Endothelial cell of umbilical vein (primary cell): ENCODE measurements at regions of chr1 and their contacts with region 1.

Region 1: GRCh38 chr1:177948336-177948972 is 21.4 kb downstream of the SEC16B start:
- DNase-seq: peak; percentile 75
- H3K4me3 ChIP-seq: no peak overlapping the region
- H3K27ac ChIP-seq: no peak overlapping the region
- H3K4me1 ChIP-seq: no peaks in the 10 kb centered on the region
- H3K27me3 ChIP-seq: no peaks in the 10 kb centered on the region
- CTCF ChIP-seq: peak; percentile 86 to 94
- POLR2A ChIP-seq: no peak

Region 2: DNA sequence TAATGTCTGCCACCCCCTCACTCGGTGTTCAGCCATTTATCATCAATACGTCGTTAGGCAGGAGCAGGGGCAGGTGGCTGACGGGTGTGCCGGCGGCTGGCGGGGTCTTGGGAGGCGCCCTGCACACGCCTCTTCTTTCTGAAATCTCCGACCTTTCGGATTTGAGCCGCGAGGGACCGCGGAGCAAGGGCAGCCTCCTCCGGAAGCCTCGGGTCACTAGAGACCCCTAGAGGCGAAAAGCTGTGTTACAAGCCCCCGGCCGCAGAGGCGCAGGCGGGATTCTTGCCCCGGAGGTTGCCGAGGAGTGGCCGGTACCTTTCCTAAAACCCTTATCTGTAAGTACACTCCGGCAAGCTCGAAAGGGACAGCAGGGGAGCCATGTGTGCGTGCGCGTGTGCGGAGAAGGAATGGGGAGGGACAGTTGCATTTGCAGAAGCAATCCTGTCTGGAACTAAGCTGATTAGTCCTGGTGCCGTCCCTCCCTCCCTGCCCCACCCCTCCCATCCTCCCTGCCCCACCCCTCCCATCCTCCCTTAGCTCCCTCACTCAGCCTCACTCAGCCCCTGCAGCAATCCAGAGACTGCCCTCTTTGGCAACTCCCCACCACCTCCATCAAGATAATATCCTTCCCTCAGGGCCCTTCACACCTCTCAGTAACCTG is 766.7 kb before region 1 on chr1:
- CTCF ChIA-PET with region 1: interaction called, 9 read pairs
- POLR2A ChIA-PET with region 1: no interaction called
- dilution Hi-C with region 1: no loop called
- intact Hi-C with region 1: loop called (anchors 5 kb)
- DNase-seq: peak; percentile 41
- H3K4me3 ChIP-seq: peak overlapping the region in 1 of 3 experiments; percentile 19
- H3K27ac ChIP-seq: no peak overlapping the region
- H3K4me1 ChIP-seq: peaks cover 3% of the 10 kb centered on the region
- H3K27me3 ChIP-seq: peaks cover 3 to 10% of the 10 kb centered on the region in 2 experiments
- CTCF ChIP-seq: peak; percentile 59 to 80
- POLR2A ChIP-seq: no peak

Region 3: GRCh38 chr1:177429263-177429662 is 519.2 kb before region 1 on chr1:
- CTCF ChIA-PET with region 1: no interaction called
- POLR2A ChIA-PET with region 1: no interaction called
- dilution Hi-C with region 1: no loop called
- intact Hi-C with region 1: loop called (anchors 2 kb)
- DNase-seq: no peak
- H3K4me3 ChIP-seq: no peak overlapping the region
- H3K27ac ChIP-seq: no peak overlapping the region
- H3K4me1 ChIP-seq: no peaks in the 10 kb centered on the region
- H3K27me3 ChIP-seq: no peaks in the 10 kb centered on the region
- CTCF ChIP-seq: no peak
- POLR2A ChIP-seq: no peak

Region 4: GRCh38 chr1:177794376-177794991 is 154.0 kb before region 1 on chr1:
- CTCF ChIA-PET with region 1: no interaction called
- POLR2A ChIA-PET with region 1: no interaction called
- dilution Hi-C with region 1: no loop called
- intact Hi-C with region 1: no loop called
- DNase-seq: no peak
- H3K4me3 ChIP-seq: no peak overlapping the region
- H3K27ac ChIP-seq: no peak overlapping the region
- H3K4me1 ChIP-seq: no peaks in the 10 kb centered on the region
- H3K27me3 ChIP-seq: no peaks in the 10 kb centered on the region
- CTCF ChIP-seq: no peak
- POLR2A ChIP-seq: no peak

Region 5: DNA sequence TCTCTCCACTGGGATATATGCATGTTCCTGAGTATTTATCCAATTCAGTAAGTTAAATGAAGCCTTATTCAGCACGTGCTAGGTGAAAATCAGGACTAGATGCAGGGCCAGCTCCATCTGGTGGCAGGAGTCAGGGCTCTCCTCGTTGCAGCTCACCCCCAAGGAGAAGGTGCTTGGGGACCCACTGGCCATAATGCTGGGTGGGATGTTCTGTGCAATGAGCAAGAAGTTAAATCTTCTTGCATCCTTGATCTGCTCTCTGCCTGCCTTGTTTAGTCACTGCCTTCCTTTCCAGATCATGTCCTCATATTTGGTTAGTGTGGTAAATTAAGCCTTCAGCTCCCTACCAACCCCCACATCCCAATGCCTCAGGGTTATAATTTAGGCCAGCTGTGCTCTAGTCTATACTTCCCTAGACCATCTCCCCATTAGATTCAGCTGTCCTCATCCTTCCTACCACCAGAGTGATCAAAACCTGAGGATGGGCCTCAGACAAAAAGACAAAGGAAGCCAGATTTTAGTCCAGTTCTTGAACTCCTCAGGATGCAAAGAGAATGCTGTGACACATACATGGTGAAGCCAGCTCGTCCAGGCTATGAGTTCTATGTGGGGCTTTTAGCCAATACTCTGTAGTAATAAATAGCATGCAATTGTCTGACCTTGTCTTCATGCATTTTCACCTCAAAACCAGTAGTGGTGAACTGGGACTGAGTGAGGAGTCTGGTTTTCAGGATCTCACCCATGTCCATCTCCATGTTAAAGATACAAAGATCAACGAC is 34.5 kb before region 1 on chr1:
- CTCF ChIA-PET with region 1: interaction called, 14 read pairs
- POLR2A ChIA-PET with region 1: no interaction called
- dilution Hi-C with region 1: no loop called
- intact Hi-C with region 1: no loop called
- DNase-seq: peak; percentile 29
- H3K4me3 ChIP-seq: no peak overlapping the region
- H3K27ac ChIP-seq: no peak overlapping the region
- H3K4me1 ChIP-seq: no peaks in the 10 kb centered on the region
- H3K27me3 ChIP-seq: peaks cover 3 to 4% of the 10 kb centered on the region in 2 experiments
- CTCF ChIP-seq: peak; percentile 26 to 35
- POLR2A ChIP-seq: no peak

Region 6: GRCh38 chr1:178189814-178190213 is 241.4 kb after region 1 on chr1:
- CTCF ChIA-PET with region 1: no interaction called
- POLR2A ChIA-PET with region 1: no interaction called
- dilution Hi-C with region 1: no loop called
- intact Hi-C with region 1: loop called (anchors 1 kb)
- DNase-seq: peak; percentile 48
- H3K4me3 ChIP-seq: no peak overlapping the region
- H3K27ac ChIP-seq: no peak overlapping the region
- H3K4me1 ChIP-seq: peaks cover 26% of the 10 kb centered on the region
- H3K27me3 ChIP-seq: no peaks in the 10 kb centered on the region
- CTCF ChIP-seq: peak; percentile 34 to 41
- POLR2A ChIP-seq: no peak

Region 7: GRCh38 chr1:178501705-178502329 is 553.4 kb after region 1 on chr1:
- CTCF ChIA-PET with region 1: interaction called, 5 read pairs
- POLR2A ChIA-PET with region 1: no interaction called
- dilution Hi-C with region 1: no loop called
- intact Hi-C with region 1: loop called (anchors 1 kb)
- DNase-seq: peak; percentile 68
- H3K4me3 ChIP-seq: no peak overlapping the region
- H3K27ac ChIP-seq: no peak overlapping the region
- H3K4me1 ChIP-seq: no peaks in the 10 kb centered on the region
- H3K27me3 ChIP-seq: no peaks in the 10 kb centered on the region
- CTCF ChIP-seq: peak; percentile 92 to 96
- POLR2A ChIP-seq: no peak